ENCODE measurements at regions of chr15 and their contacts with region 1.

Region 1: DNA sequence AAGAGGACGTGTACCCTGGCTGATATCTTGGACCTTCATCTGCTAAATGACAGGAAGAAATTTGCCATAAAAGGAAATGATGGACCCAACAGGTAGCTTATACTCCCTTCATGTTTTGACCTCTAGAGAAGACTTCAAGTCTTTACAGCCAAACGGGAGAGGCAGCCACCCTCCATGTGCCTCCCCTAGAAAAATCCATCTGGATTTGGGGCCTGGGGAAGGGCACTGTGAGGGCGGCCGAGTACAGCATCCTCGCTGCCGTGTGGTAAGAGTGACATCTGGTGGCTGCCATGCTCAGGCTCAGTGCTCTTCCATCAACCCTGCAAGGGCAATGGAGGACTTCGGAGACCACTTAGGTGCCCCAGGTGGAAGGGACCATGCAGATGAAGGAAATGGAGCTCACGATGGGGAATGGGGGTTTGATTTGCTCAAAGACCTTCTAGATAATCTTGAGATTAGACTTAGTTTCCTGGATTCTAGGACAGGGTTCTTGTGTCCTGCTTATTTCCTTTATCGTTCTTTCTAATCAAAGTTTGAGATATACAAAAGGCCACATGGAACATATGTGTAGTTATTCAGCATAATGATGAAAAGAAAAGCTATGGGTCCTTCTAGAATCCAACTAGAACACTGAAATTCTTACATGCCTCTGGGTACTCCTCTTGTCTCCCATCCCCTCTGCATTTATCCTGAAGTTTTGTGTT is 44.4 kb downstream of the AQP9 start:
- DNase-seq: no peak
- H3K4me3 ChIP-seq: no peak overlapping the region
- H3K27ac ChIP-seq: no peak overlapping the region
- H3K4me1 ChIP-seq: no peaks in the 10 kb centered on the region
- H3K27me3 ChIP-seq: no peaks in the 10 kb centered on the region
- CTCF ChIP-seq: peak in 3 of 4 experiments; percentile 55 to 77 (median 70)
- POLR2A ChIP-seq: no peak

Region 2: GRCh38 chr15:57866149-57866736 is 316.4 kb before region 1 on chr15:
- intact Hi-C with region 1: loop called (anchors 10 kb)
- DNase-seq: peak; percentile 38
- H3K4me3 ChIP-seq: no peak overlapping the region
- H3K27ac ChIP-seq: no peak overlapping the region
- H3K4me1 ChIP-seq: no peaks in the 10 kb centered on the region
- H3K27me3 ChIP-seq: no peaks in the 10 kb centered on the region
- CTCF ChIP-seq: peak in 3 of 4 experiments; percentile 42 to 58 (median 49)
- POLR2A ChIP-seq: no peak

Region 3: DNA sequence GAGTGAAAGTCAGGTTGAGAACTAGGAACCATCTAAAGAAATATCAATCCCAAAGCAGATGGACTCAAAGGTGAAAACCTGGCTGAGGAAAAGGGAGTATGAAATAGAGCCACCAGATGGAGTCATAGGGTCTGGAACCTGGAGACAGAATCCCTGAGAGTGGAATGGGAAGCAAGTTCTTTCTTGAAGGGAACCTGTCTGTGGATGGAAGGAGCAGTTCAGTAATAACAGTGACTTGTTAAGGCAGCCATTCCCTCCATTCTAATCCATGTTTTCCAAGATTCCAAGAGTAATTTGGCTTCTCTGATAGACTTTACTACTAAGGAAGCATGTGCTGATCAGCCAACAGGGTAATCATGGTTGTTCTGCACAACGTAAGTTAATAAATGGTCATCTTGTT is 66.9 kb before region 1 on chr15:
- intact Hi-C with region 1: loop called (anchors 2 kb)
- DNase-seq: no peak
- H3K4me3 ChIP-seq: no peak overlapping the region
- H3K27ac ChIP-seq: no peak overlapping the region
- H3K4me1 ChIP-seq: no peaks in the 10 kb centered on the region
- H3K27me3 ChIP-seq: no peaks in the 10 kb centered on the region
- CTCF ChIP-seq: peak in 1 of 4 experiments; percentile 27
- POLR2A ChIP-seq: no peak

Measured in prostate gland (tissue), 2 donors.